ENCODE measurements at regions of chr10 and their contacts with region 1.

Region 1: GRCh38 chr10:62816331-62817120 is at the start of gene EGR2:
- DNase-seq: peak; percentile 90 to 98 (median 95)
- ATAC-seq: peak; percentile 82
- H3K4me3 ChIP-seq: peak within 1 kb of the TSS; percentile 74 to 85
- H3K4me3 Mint-ChIP-seq: peak within 1 kb of the TSS; percentile 98
- H3K27ac ChIP-seq: peak within 1 kb of the TSS; percentile 73 to 80
- H3K27ac Mint-ChIP-seq: peak within 1 kb of the TSS; percentile 98
- H3K4me1 ChIP-seq: peaks cover 35% of the 10 kb centered on the region
- H3K4me1 Mint-ChIP-seq: peaks cover 45% of the 10 kb centered on the region
- H3K27me3 ChIP-seq: peaks cover 6 to 10% of the 10 kb centered on the region in 2 experiments
- H3K27me3 Mint-ChIP-seq: peaks cover 27% of the 10 kb centered on the region
- CTCF ChIP-seq: no peak
- total RNA-seq, gene EGR2: 5.6 to 6.1 TPM

Region 2: DNA sequence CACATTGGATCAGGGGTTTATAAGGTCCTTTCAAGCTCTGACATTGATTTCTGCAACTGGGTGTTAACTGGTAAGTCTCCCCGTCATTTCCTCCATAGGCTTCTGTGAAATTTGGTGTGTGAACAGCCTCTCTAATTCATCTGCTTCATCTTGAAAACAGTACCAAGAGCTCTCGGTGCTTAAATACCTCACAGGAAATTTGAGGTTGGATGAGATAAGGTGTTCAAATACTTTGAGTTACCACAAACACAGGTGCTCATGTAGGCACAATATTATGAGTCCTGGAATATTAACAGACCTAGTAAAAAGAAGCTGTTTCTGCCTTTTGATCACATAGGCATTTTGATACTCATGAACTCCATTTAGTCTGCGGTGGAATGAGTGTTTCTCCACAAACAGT is 633.1 kb before region 1 on chr10:
- CTCF ChIA-PET with region 1: no interaction called
- POLR2A ChIA-PET with region 1: interaction called, 3 read pairs
- intact Hi-C with region 1: loop called in 1 of 2 experiments (anchors 10 kb)
- DNase-seq: peak in 7 of 9 experiments; percentile 20 to 89 (median 51)
- ATAC-seq: peak; percentile 87
- H3K4me3 ChIP-seq: no peak overlapping the region
- H3K4me3 Mint-ChIP-seq: peak overlapping the region; percentile 30
- H3K27ac ChIP-seq: peak overlapping the region; percentile 6 to 41
- H3K27ac Mint-ChIP-seq: peak overlapping the region; percentile 83
- H3K4me1 ChIP-seq: peaks cover 58% of the 10 kb centered on the region
- H3K4me1 Mint-ChIP-seq: peaks cover 75% of the 10 kb centered on the region
- H3K27me3 ChIP-seq: no peaks in the 10 kb centered on the region
- H3K27me3 Mint-ChIP-seq: no peaks in the 10 kb centered on the region
- CTCF ChIP-seq: no peak

Region 3: DNA sequence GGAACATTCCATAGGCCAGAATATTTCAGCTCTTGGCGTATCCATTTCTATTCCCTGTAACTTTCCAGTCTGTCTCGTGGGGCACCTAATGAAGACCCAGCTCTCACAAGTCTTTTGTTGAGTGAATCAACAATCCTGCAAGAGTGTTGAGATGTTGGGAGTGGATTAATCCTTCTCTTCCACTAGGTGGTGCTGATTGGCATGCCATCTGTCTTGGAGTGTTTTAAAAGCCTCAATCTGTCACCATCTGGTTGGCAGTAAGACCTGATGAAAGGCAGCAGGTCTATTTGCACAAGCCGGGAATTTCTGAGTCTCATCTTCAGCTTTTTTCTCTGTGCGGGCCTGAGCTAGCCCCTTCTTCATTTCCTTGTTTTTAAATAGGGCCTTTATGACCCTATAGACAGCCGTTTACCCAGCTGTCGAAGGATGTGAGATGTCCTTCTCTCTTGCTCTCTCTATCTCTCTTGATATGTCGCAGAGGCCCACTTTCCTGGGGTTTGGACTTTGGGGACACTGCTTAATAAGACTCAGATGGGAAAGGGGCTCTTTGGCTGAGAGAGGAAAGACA is 261.8 kb before region 1 on chr10:
- CTCF ChIA-PET with region 1: interaction called, 3 read pairs
- POLR2A ChIA-PET with region 1: no interaction called
- intact Hi-C with region 1: loop called in 1 of 2 experiments (anchors 1 kb)
- DNase-seq: peak in 3 of 9 experiments; percentile 19 to 55 (median 34)
- ATAC-seq: no peak
- H3K4me3 ChIP-seq: no peak overlapping the region
- H3K4me3 Mint-ChIP-seq: no peak overlapping the region
- H3K27ac ChIP-seq: no peak overlapping the region
- H3K27ac Mint-ChIP-seq: no peak overlapping the region
- H3K4me1 ChIP-seq: no peaks in the 10 kb centered on the region
- H3K4me1 Mint-ChIP-seq: no peaks in the 10 kb centered on the region
- H3K27me3 ChIP-seq: no peaks in the 10 kb centered on the region
- H3K27me3 Mint-ChIP-seq: peaks cover 15% of the 10 kb centered on the region
- CTCF ChIP-seq: peak; percentile 41

Region 4: DNA sequence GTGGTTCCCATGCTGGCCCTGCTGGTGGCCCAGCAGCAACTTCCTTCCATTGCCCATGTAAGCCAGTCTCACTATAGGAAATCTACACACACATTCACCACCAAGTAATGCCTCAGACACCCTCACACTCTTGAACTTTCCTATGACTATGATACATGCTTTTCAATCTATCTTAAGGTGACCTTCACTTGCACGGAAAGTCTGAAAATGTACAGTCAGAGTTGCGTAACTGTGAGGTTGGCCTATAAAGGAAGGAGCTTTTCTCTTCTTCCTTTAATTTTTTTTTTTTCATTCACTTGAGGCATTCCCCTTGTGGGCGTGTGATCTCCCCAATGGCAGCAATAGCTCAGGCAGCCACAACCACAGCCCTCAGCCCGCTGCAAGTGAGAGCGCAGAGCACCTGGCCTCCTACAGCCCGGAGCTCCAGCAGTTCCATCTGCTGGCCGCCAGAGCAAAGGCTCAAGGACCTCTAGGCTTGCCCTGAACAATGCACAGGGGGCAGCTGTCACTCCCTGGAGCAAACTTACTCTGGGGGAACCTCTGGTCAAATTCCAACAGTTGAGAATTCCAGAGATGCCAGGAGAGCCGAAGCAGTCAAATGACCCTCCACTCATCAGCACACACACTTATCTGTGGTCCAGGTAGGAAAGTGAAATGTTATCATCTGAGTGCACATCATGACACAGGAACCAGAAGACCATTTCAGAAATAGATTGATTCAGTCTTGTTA is 135.2 kb before region 1 on chr10:
- CTCF ChIA-PET with region 1: interaction called, 7 read pairs
- POLR2A ChIA-PET with region 1: interaction called, 3 read pairs
- intact Hi-C with region 1: loop called (anchors 5 kb)
- DNase-seq: peak; percentile 18 to 94 (median 57)
- ATAC-seq: peak; percentile 94
- H3K4me3 ChIP-seq: no peak overlapping the region
- H3K4me3 Mint-ChIP-seq: no peak overlapping the region
- H3K27ac ChIP-seq: peak overlapping the region in 1 of 2 experiments; percentile 20
- H3K27ac Mint-ChIP-seq: peak overlapping the region; percentile 58
- H3K4me1 ChIP-seq: peaks cover 14% of the 10 kb centered on the region
- H3K4me1 Mint-ChIP-seq: peaks cover 23% of the 10 kb centered on the region
- H3K27me3 ChIP-seq: no peaks in the 10 kb centered on the region
- H3K27me3 Mint-ChIP-seq: peaks cover 6% of the 10 kb centered on the region
- CTCF ChIP-seq: no peak

Region 5: GRCh38 chr10:62831346-62831745 is 14.8 kb after region 1 on chr10:
- CTCF ChIA-PET with region 1: interaction called, 13 read pairs
- POLR2A ChIA-PET with region 1: no interaction called
- intact Hi-C with region 1: no loop called
- DNase-seq: no peak
- ATAC-seq: no peak
- H3K4me3 ChIP-seq: no peak overlapping the region
- H3K4me3 Mint-ChIP-seq: no peak overlapping the region
- H3K27ac ChIP-seq: no peak overlapping the region
- H3K27ac Mint-ChIP-seq: no peak overlapping the region
- H3K4me1 ChIP-seq: no peaks in the 10 kb centered on the region
- H3K4me1 Mint-ChIP-seq: no peaks in the 10 kb centered on the region
- H3K27me3 ChIP-seq: peaks cover 0 to 3% of the 10 kb centered on the region in 2 experiments
- H3K27me3 Mint-ChIP-seq: peaks cover 10% of the 10 kb centered on the region
- CTCF ChIP-seq: no peak

Region 6: GRCh38 chr10:63227207-63227915 is 410.8 kb after region 1 on chr10:
- CTCF ChIA-PET with region 1: no interaction called
- POLR2A ChIA-PET with region 1: no interaction called
- intact Hi-C with region 1: no loop called
- DNase-seq: peak in 2 of 9 experiments; percentile 30 to 59
- ATAC-seq: peak; percentile 36
- H3K4me3 ChIP-seq: no peak overlapping the region
- H3K4me3 Mint-ChIP-seq: peak overlapping the region; percentile 61
- H3K27ac ChIP-seq: peak overlapping the region in 1 of 2 experiments; percentile 49
- H3K27ac Mint-ChIP-seq: peak overlapping the region; percentile 88
- H3K4me1 ChIP-seq: peaks cover 42% of the 10 kb centered on the region
- H3K4me1 Mint-ChIP-seq: peaks cover 72% of the 10 kb centered on the region
- H3K27me3 ChIP-seq: no peaks in the 10 kb centered on the region
- H3K27me3 Mint-ChIP-seq: no peaks in the 10 kb centered on the region
- CTCF ChIP-seq: no peak

Region 7: GRCh38 chr10:63268798-63269503 is 452.4 kb after region 1 on chr10:
- CTCF ChIA-PET with region 1: no interaction called
- POLR2A ChIA-PET with region 1: no interaction called
- intact Hi-C with region 1: loop called in 1 of 2 experiments (anchors 10 kb)
- DNase-seq: peak; percentile 55 to 95 (median 77)
- ATAC-seq: peak; percentile 90
- H3K4me3 ChIP-seq: peak overlapping the region; percentile 51 to 89
- H3K4me3 Mint-ChIP-seq: peak overlapping the region; percentile 97
- H3K27ac ChIP-seq: peak overlapping the region; percentile 81 to 97
- H3K27ac Mint-ChIP-seq: peak overlapping the region; percentile 99
- H3K4me1 ChIP-seq: peaks cover 20% of the 10 kb centered on the region
- H3K4me1 Mint-ChIP-seq: peaks cover 22% of the 10 kb centered on the region
- H3K27me3 ChIP-seq: no peaks in the 10 kb centered on the region
- H3K27me3 Mint-ChIP-seq: no peaks in the 10 kb centered on the region
- CTCF ChIP-seq: peak; percentile 23

Measured in CD8-positive, alpha-beta T cell (primary cell).